Sciatic nerve (tissue), 2 donors: ENCODE measurements at regions of chr12 and their contacts with region 1.

Region 1: GRCh38 chr12:8949342-8950220 is at the start of gene M6PR:
- DNase-seq: peak; percentile 95
- ATAC-seq: peak; percentile 98
- total RNA-seq, gene M6PR: 101 TPM

Region 2: GRCh38 chr12:9027161-9028059 is 77.8 kb after region 1 on chr12:
- intact Hi-C with region 1: loop called (anchors 10 kb)
- DNase-seq: no peak
- ATAC-seq: no peak

Region 3: GRCh38 chr12:9391815-9392214 is 442.2 kb after region 1 on chr12:
- intact Hi-C with region 1: no loop called
- DNase-seq: no peak
- ATAC-seq: no peak